IMR-90 (cell line): ENCODE measurements at regions of chr19 and their contacts with region 1.

Region 1: GRCh38 chr19:2543463-2544442 is 67.8 kb downstream of the GADD45B start:
- DNase-seq: peak; percentile 98
- ATAC-seq: peak; percentile 83
- H3K4me3 ChIP-seq: peak overlapping the region; percentile 5; the same call in 1 of the 2 replicates
- H3K27ac ChIP-seq: peak overlapping the region; percentile 92
- H3K4me1 ChIP-seq: peaks cover 33% of the 10 kb centered on the region
- H3K27me3 ChIP-seq: no peaks in the 10 kb centered on the region
- CTCF ChIP-seq: peak; percentile 56
- POLR2A ChIP-seq: no peak
- RAD21 ChIP-seq: peak; percentile 66

Region 2: DNA sequence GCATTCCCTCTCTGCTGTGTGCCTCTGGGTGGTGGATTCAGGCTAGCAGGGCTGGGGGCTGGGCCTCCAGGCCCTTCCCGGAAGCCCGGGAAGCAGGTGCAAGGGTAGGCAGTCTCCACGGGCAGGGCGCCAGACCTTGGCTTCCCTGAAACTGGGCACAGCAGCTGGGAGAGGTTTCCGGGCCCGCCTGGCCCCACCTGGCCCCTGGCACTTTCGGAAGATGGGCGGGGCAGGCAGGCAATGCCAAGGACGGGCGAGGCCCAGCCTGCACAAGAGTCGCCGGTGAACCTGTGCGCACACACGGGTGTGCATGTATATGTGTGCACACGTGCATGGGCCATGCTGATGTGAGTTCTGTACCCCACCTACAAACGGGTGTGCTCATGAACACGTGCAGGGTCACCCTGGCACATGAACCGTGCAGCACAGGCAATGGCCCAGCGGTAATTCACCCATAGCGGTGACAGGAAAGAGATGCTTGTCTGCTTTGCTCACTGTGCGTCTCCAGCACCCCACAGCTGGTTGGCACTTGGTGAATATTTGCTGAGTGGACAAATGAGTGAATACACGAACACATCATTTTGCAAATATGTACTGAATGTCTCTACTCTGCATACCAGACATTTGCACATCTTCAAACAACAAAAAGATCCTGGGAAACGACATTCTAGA is 52.5 kb before region 1 on chr19:
- CTCF ChIA-PET with region 1: no interaction called
- POLR2A ChIA-PET with region 1: no interaction called
- dilution Hi-C with region 1: no loop called
- in situ Hi-C with region 1: no loop called
- intact Hi-C with region 1: loop called (anchors 1 kb)
- DNase-seq: peak; percentile 84
- ATAC-seq: peak; percentile 53
- H3K4me3 ChIP-seq: no peak overlapping the region
- H3K27ac ChIP-seq: peak overlapping the region; percentile 2; the same call in 1 of the 2 replicates
- H3K4me1 ChIP-seq: peaks cover 22% of the 10 kb centered on the region
- H3K27me3 ChIP-seq: no peaks in the 10 kb centered on the region; the same call in 1 of the 2 replicates
- CTCF ChIP-seq: no peak
- POLR2A ChIP-seq: no peak
- RAD21 ChIP-seq: no peak

Region 3: DNA sequence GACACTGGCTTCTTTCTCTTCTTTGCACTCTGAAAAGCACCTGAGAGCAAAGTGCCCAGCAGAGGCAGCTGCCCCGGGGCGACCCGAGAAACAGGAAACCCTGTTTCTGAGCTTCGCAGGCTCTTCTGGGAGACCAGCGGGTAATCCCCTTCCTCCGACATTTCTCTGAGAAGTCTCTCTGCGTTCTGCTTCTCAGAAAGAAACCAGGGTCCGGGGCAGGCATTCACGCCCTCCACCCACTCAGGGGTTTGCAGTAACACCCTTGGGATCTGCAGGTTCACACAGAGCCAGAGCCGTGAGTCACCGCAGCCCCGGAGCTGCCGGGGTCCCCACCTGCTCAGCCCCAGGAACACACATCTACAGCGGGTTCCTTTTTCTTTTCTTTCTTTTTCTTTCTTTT is 18.1 kb after region 1 on chr19:
- CTCF ChIA-PET with region 1: no interaction called
- POLR2A ChIA-PET with region 1: interaction called, 17 read pairs
- dilution Hi-C with region 1: no loop called
- in situ Hi-C with region 1: no loop called
- intact Hi-C with region 1: no loop called
- DNase-seq: no peak
- ATAC-seq: no peak
- H3K4me3 ChIP-seq: no peak overlapping the region
- H3K27ac ChIP-seq: no peak overlapping the region
- H3K4me1 ChIP-seq: no peaks in the 10 kb centered on the region
- H3K27me3 ChIP-seq: peaks cover 4% of the 10 kb centered on the region; the same call in 1 of the 2 replicates
- CTCF ChIP-seq: no peak
- POLR2A ChIP-seq: no peak
- RAD21 ChIP-seq: no peak

Region 4: GRCh38 chr19:2578901-2579677 is 35.3 kb after region 1 on chr19:
- CTCF ChIA-PET with region 1: interaction called, 5 read pairs
- POLR2A ChIA-PET with region 1: interaction called, 6 read pairs
- dilution Hi-C with region 1: no loop called
- in situ Hi-C with region 1: no loop called
- intact Hi-C with region 1: loop called (anchors 1 kb)
- DNase-seq: peak; percentile 89
- ATAC-seq: peak; percentile 91
- H3K4me3 ChIP-seq: peak overlapping the region; percentile 44
- H3K27ac ChIP-seq: peak overlapping the region; percentile 75
- H3K4me1 ChIP-seq: peaks cover 15% of the 10 kb centered on the region
- H3K27me3 ChIP-seq: no peaks in the 10 kb centered on the region
- CTCF ChIP-seq: peak; percentile 92
- POLR2A ChIP-seq: peak; percentile 32; the same call in 1 of the 2 replicates
- RAD21 ChIP-seq: peak; percentile 96